ENCODE measurements at regions of chr1 and their contacts with region 1.

Region 1: DNA sequence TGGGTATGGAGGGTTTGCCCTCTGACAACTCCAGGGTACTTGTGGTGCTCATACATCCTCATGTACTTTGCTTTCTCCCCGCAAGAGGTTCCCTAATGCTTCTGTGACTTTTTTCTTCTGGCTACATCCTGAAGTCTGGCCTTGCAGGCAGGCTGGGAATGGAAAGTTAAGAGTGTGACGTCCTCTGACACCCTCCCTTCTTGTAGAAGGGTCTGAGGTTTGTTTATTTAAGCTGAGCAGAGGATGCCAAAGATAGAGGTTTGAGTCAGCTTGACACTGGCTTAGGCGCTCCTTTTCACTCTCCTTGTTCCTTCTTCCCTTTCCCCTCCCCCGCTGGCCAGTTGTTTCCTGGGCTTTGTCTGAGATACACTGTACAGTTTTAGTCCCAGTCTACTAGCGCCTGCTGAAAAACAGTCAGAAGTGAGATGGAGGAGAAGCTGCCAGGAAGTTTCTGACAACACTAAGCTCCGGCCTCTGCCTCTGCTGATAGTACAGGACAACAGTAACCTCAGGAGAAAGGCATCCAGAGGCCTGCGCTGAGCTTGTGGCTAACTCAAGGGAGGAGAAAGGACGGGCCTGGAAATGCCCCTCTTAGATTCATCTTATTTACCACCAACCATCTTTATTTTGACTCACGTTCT is at the start of gene MACF1:
- DNase-seq: peak; percentile 56
- H3K4me3 Mint-ChIP-seq: peak within 1 kb of the TSS; percentile 95
- H3K27ac Mint-ChIP-seq: peak within 1 kb of the TSS; percentile 96
- H3K4me1 Mint-ChIP-seq: peaks cover 61% of the 10 kb centered on the region
- H3K27me3 Mint-ChIP-seq: no peaks in the 10 kb centered on the region

Region 2: GRCh38 chr1:39183503-39184353 is 20.8 kb before region 1 on chr1:
- CTCF ChIA-PET with region 1: interaction called, 17 read pairs
- DNase-seq: peak; percentile 91
- H3K4me3 Mint-ChIP-seq: peak overlapping the region; percentile 11
- H3K27ac Mint-ChIP-seq: peak overlapping the region; percentile 91
- H3K4me1 Mint-ChIP-seq: peaks cover 49% of the 10 kb centered on the region
- H3K27me3 Mint-ChIP-seq: no peaks in the 10 kb centered on the region

Region 3: DNA sequence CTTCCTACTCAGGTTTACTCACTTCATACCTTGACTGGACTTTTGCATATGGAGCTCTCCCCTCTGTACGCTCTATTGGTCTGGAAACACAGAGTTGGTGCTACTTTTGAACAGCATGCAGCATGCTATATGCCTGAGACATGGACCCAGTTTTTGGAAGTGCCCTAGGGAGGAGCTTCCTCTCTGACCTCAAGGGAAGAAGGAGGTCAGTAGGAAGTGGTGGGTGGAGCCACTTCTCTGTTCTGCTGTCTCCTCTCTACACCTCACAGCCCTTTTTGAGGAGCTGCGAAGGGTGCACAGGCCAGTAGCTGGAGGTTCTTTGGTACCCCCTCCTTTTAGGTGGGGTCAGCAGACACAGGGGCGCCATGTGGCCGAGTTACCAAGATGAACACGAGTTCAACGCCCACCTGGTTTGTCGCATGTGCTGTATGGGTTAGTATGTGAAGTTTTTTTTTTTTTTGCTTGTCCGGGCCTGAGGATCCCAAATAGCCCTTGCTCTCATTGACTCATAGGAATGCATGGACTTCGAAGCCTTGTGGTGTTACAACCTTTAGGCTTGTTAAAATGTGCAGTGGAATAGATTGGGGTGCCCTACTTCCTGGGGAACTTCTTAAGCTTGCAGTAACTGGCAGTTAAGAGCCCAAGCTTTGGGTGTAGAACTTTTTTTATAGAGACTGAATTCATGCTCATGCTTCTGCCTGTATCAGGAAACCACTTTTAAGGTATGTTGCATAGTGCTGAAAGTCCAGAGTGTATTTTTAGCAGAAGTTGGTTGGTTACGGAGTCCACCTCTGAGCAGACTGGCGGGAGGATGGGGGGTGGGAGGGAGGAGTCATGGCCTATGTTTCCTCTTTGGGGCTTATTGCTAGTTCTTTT is 10.7 kb after region 1 on chr1:
- CTCF ChIA-PET with region 1: interaction called, 16 read pairs
- DNase-seq: peak; percentile 64
- H3K4me3 Mint-ChIP-seq: peak overlapping the region; percentile 77
- H3K27ac Mint-ChIP-seq: peak overlapping the region; percentile 84
- H3K4me1 Mint-ChIP-seq: peaks cover 58% of the 10 kb centered on the region
- H3K27me3 Mint-ChIP-seq: no peaks in the 10 kb centered on the region

Region 4: GRCh38 chr1:39238476-39238875 is 33.9 kb after region 1 on chr1:
- CTCF ChIA-PET with region 1: no interaction called
- DNase-seq: no peak
- H3K4me3 Mint-ChIP-seq: no peak overlapping the region
- H3K27ac Mint-ChIP-seq: peak overlapping the region; percentile 24
- H3K4me1 Mint-ChIP-seq: peaks cover 33% of the 10 kb centered on the region
- H3K27me3 Mint-ChIP-seq: no peaks in the 10 kb centered on the region

Region 5: GRCh38 chr1:39282537-39283216 is 78.1 kb after region 1 on chr1:
- CTCF ChIA-PET with region 1: no interaction called
- DNase-seq: no peak
- H3K4me3 Mint-ChIP-seq: no peak overlapping the region
- H3K27ac Mint-ChIP-seq: no peak overlapping the region
- H3K4me1 Mint-ChIP-seq: peaks cover 11% of the 10 kb centered on the region
- H3K27me3 Mint-ChIP-seq: no peaks in the 10 kb centered on the region